Activated T-helper 2 cell treated with anti-CD3 and anti-CD28 coated beads, Interferon-gamma antibody, Interleukin-2, Interleukin-4, amounts not matched to agents 10 μg/mL and 5 μg/mL and 100 μg/mL, durations not matched to agents 14 hours and 24 hours and 36 hours (primary cell): ENCODE measurements at regions of chr14 and their contacts with region 1.

Region 1: DNA sequence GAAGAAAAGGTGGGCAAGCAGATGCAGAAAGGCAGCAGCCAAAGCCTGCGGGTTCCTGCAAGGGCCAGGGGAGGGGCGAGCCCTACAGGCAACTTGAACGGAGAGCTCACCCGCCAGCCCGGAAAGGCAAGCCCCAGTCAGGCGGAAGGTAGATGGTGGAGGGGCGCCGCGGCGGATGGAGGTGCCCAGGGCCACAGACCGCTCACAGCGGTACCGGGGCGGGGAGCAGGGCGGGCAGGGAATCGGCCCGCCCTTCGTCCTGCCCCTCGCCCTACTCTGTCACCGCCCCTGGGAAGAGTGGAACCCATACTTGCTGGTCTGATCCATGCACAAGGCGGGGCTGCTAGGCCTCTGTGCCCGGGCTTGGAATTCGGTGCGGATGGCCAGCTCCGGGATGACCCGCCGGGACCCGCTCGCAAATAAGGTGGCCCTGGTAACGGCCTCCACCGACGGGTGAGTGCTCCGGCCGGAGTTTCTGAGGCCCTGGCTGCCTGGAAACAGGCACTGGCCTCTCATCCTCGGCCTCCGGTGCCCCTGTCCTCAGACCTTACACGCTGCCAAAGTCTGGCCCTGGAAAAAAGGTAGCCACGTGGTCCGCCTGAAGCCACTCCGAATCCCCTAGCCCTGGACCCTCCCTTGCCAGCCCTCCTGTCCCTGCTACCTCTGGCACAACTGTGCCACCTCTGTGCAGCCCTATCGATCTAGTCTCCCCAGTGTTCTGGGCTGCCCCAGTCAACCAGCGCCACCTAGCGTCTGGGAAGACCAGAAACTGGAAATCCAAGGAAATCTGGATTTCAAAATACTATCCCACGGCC is at the start of gene DHRS4:
- DNase-seq: peak; percentile 74
- H3K4me3 Mint-ChIP-seq: peak within 1 kb of the TSS; percentile 94
- H3K27ac Mint-ChIP-seq: peak within 1 kb of the TSS; percentile 78
- H3K4me1 Mint-ChIP-seq: peaks cover 16% of the 10 kb centered on the region
- H3K27me3 Mint-ChIP-seq: no peaks in the 10 kb centered on the region
- total RNA-seq, gene DHRS4: 17.8 and 22.5 TPM in 2 replicates

Region 2: GRCh38 chr14:23567192-23568020 is 386.3 kb before region 1 on chr14 and contains the start of gene AP1G2:
- intact Hi-C with region 1: loop called (anchors 5 kb)
- DNase-seq: peak; percentile 86
- H3K4me3 Mint-ChIP-seq: peak within 1 kb of the TSS; percentile 99
- H3K27ac Mint-ChIP-seq: peak within 1 kb of the TSS; percentile 95
- H3K4me1 Mint-ChIP-seq: peaks cover 15% of the 10 kb centered on the region
- H3K27me3 Mint-ChIP-seq: peaks cover 4% of the 10 kb centered on the region
- total RNA-seq, gene AP1G2: 164 and 170 TPM in 2 replicates

Region 3: DNA sequence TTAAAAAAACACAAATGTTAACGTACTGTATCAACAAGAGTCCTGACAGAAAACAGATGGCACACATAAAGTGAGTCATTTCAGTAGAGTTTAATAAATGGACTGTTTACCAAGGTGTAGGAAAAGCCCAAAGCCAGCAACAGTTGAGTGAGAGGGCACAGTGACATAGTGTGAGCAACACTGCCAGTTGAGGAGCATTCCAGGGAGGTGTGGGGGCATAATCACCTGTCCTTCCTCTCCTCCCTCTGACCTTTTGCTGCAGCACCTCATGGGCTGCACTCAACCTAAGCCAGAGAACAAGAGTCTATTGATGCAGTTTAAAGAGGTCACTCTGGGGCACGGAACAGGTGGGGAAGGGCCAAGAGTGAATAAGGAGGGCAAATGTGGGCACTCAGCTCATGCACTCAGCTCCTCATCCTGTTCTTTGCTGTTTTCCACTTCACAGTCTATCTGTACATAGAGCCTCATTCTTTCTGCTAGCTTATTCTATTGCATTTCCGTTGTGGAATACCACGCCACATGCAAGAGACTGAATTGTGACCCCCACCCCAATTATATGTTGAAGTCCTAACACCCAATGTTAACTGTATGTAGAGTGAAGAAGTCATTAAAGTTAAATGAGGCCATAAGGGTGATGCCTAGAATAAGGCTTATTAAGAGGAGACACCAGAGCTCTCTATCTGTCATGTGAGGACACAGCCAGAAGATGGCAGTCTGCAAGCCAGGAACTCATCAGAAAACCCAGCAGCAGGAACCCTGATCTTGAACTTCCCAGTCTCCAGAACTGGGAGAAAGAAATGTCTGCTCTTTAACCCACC is 288.1 kb before region 1 on chr14:
- intact Hi-C with region 1: loop called (anchors 2 kb)
- DNase-seq: no peak
- H3K4me3 Mint-ChIP-seq: no peak overlapping the region
- H3K27ac Mint-ChIP-seq: no peak overlapping the region
- H3K4me1 Mint-ChIP-seq: no peaks in the 10 kb centered on the region
- H3K27me3 Mint-ChIP-seq: peaks cover 3% of the 10 kb centered on the region

Region 4: GRCh38 chr14:23910101-23910875 is 43.4 kb before region 1 on chr14:
- intact Hi-C with region 1: no loop called
- DNase-seq: no peak
- H3K4me3 Mint-ChIP-seq: no peak overlapping the region
- H3K27ac Mint-ChIP-seq: no peak overlapping the region
- H3K4me1 Mint-ChIP-seq: peaks cover 7% of the 10 kb centered on the region
- H3K27me3 Mint-ChIP-seq: no peaks in the 10 kb centered on the region